ENCODE measurements at regions of chr17 and their contacts with region 1.

Region 1: DNA sequence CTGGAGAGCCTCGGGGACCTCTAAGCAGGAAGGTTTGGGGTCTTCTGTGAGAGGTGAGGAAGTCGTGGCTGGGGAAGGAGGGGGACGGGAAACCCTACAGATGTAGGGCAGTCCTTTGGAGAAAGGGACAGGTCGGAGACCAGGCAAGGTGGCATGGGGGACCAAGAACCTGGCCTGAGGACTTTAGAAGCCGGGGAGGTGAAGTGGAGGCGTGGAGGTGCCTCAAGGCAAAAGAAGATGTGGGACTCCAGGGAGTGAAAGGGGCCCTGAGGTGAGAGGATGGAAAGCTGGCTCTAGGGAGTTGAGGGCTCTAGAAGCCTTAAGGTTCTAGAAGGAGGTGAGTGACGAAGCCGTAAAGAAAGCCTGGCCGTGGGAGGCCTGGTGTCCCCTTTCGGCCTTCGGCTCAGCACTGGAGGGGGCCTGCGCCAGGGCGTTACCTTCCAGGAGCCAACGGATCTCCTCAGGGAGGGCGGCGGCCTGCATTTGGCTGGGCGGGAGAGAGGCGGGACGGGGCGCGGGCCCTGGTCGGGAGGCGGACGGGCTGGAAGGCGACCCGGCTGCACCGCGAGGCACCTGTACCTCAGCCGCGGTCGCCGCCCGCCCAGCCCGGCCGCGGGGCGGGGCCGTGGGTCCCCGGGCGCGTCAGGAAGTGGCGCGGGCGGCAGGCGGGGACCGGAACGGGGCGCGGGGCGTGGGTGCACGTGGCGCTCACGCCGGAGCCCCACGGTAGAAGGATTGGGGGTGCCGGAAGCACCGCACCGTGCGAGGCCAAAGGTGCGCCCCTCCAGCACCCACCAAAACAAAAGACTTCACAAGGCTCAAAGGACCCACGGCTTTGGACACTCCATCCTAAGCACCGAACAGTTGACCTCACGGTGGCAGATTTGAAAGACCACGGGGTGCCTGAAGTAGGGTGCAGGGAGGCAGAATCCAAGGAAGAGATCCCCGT is at the start of gene SKAP1:
- DNase-seq: peak; percentile 68
- H3K4me3 Mint-ChIP-seq: peak within 1 kb of the TSS; percentile 97
- H3K27ac Mint-ChIP-seq: peak within 1 kb of the TSS; percentile 93
- H3K4me1 Mint-ChIP-seq: peaks cover 65% of the 10 kb centered on the region
- H3K27me3 Mint-ChIP-seq: no peaks in the 10 kb centered on the region
- total RNA-seq, gene SKAP1: 60.5 and 67.9 TPM in 2 replicates

Region 2: GRCh38 chr17:48198950-48199541 is 230.9 kb before region 1 on chr17:
- intact Hi-C with region 1: no loop called
- DNase-seq: no peak
- H3K4me3 Mint-ChIP-seq: no peak overlapping the region
- H3K27ac Mint-ChIP-seq: no peak overlapping the region
- H3K4me1 Mint-ChIP-seq: peaks cover 39% of the 10 kb centered on the region
- H3K27me3 Mint-ChIP-seq: no peaks in the 10 kb centered on the region

Region 3: GRCh38 chr17:48413613-48414405 is 16.1 kb before region 1 on chr17:
- intact Hi-C with region 1: loop called (anchors 1 kb)
- DNase-seq: no peak
- H3K4me3 Mint-ChIP-seq: peak overlapping the region; percentile 19
- H3K27ac Mint-ChIP-seq: peak overlapping the region; percentile 86
- H3K4me1 Mint-ChIP-seq: peaks cover 66% of the 10 kb centered on the region
- H3K27me3 Mint-ChIP-seq: no peaks in the 10 kb centered on the region

Region 4: GRCh38 chr17:48492401-48493298 is 62.7 kb after region 1 on chr17:
- intact Hi-C with region 1: loop called (anchors 2 kb)
- DNase-seq: peak; percentile 61
- H3K4me3 Mint-ChIP-seq: peak overlapping the region; percentile 37
- H3K27ac Mint-ChIP-seq: no peak overlapping the region
- H3K4me1 Mint-ChIP-seq: peaks cover 36% of the 10 kb centered on the region
- H3K27me3 Mint-ChIP-seq: peaks cover 23% of the 10 kb centered on the region

Region 5: DNA sequence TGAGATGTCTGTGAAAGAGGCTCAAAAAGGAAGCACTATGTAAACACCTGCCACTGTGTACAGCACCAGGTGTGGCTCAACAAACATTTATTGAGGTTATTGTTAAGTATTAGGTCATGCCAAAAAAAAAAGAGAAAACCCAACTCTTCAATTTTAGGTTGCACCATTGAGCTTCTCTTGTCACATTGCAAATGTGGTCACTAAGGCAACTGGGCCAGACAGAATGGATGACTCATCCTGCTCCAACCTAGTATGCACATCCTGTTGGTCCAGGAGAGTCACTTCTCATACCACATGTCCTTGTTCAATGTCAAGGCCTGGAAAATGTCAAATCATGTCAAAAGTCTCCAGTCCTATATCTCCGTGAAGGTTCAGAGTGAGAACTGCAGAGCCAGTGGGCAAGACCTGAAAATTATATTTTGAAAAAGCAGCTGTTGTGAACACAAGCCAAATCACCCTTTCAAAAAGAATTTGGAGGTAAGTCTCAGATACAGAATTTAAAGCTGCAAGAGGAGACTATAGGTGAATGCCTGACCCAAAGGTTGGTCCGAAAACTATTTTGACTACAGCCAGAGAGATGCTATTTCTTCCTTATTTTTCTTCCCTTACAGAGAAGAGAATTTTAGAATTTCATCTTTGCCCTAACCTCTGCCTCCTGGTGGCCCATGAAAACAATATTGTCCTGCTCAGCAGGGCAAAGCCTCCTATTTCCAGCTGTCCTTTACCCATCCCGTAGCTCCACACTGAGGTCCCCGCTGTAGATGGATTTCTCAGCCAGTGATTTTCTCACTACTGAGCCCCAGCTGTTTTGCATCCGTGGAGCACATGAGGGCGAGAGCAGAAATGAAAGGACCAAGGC is 76.1 kb after region 1 on chr17:
- intact Hi-C with region 1: no loop called
- DNase-seq: peak; percentile 60
- H3K4me3 Mint-ChIP-seq: no peak overlapping the region
- H3K27ac Mint-ChIP-seq: peak overlapping the region; percentile 63
- H3K4me1 Mint-ChIP-seq: peaks cover 33% of the 10 kb centered on the region
- H3K27me3 Mint-ChIP-seq: peaks cover 18% of the 10 kb centered on the region